HCT116 (cell line): ENCODE measurements at regions of chr1 and their contacts with region 1.

Region 1: DNA sequence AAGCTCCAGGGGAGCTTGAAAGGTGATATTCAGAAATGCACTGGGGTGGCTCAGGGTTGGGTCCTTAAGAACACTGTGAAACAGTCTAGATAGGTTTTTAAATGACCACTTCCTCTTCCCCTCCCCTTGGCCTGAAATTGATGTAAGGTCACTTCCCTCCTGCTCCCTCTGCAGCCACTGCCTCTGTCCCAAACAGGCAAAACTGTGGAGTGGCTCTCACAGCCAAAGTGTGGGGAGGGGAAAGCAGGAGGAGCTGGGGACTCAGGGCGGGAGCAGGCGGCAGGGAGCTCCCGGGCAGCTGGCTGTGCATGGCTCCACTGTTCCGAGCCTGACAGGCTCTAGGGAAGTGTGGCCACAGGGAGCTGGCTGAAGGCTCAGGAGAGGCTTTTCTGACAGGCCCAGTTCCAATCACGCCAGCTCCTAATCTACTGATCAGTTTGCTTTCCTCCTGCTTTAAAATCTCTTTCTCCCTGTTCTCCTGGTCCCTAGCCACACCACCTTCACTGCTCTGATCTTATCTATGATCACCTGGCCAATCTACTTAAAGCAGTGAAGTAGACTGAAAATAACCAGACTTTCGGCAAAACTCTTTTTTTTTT is 5.1 kb upstream of the CSRP1 start:
- DNase-seq: no peak
- ATAC-seq: no peak
- H3K4me3 ChIP-seq: no peak overlapping the region
- H3K27ac ChIP-seq: no peak overlapping the region
- H3K4me1 ChIP-seq: peaks cover 13 to 34% of the 10 kb centered on the region in 2 experiments
- H3K27me3 ChIP-seq: no peaks in the 10 kb centered on the region
- CTCF ChIP-seq: no peak
- POLR2A ChIP-seq: no peak
- RAD21 ChIP-seq: no peak

Region 2: GRCh38 chr1:201436393-201436792 is 75.6 kb before region 1 on chr1:
- CTCF ChIA-PET with region 1: interaction called, 41 read pairs
- POLR2A ChIA-PET with region 1: no interaction called
- RAD21 ChIA-PET with region 1: interaction called in 1 of 2 experiments, 5 read pairs
- intact Hi-C with region 1: loop called (anchors 1 kb)
- DNase-seq: peak; percentile 56
- ATAC-seq: peak; percentile 97
- H3K4me3 ChIP-seq: no peak overlapping the region
- H3K27ac ChIP-seq: no peak overlapping the region
- H3K4me1 ChIP-seq: peaks cover 13 to 19% of the 10 kb centered on the region in 2 experiments
- H3K27me3 ChIP-seq: no peaks in the 10 kb centered on the region
- CTCF ChIP-seq: peak; percentile 40 to 54 (median 48); a peak in 5 of 6 replicates
- POLR2A ChIP-seq: no peak
- RAD21 ChIP-seq: peak; percentile 54

Region 3: GRCh38 chr1:201447911-201448871 is 63.8 kb before region 1 on chr1:
- CTCF ChIA-PET with region 1: interaction called, 41 read pairs
- POLR2A ChIA-PET with region 1: interaction called, 3 read pairs
- RAD21 ChIA-PET with region 1: interaction called, 6 to 12 read pairs
- intact Hi-C with region 1: loop called (anchors 1 kb)
- DNase-seq: peak; percentile 57
- ATAC-seq: peak; percentile 100
- H3K4me3 ChIP-seq: no peak overlapping the region
- H3K27ac ChIP-seq: no peak overlapping the region
- H3K4me1 ChIP-seq: peaks cover 7 to 19% of the 10 kb centered on the region in 2 experiments; a peak in 3 of 4 replicates
- H3K27me3 ChIP-seq: no peaks in the 10 kb centered on the region
- CTCF ChIP-seq: peak; percentile 89 to 95 (median 94)
- POLR2A ChIP-seq: no peak
- RAD21 ChIP-seq: peak; percentile 91

Region 4: DNA sequence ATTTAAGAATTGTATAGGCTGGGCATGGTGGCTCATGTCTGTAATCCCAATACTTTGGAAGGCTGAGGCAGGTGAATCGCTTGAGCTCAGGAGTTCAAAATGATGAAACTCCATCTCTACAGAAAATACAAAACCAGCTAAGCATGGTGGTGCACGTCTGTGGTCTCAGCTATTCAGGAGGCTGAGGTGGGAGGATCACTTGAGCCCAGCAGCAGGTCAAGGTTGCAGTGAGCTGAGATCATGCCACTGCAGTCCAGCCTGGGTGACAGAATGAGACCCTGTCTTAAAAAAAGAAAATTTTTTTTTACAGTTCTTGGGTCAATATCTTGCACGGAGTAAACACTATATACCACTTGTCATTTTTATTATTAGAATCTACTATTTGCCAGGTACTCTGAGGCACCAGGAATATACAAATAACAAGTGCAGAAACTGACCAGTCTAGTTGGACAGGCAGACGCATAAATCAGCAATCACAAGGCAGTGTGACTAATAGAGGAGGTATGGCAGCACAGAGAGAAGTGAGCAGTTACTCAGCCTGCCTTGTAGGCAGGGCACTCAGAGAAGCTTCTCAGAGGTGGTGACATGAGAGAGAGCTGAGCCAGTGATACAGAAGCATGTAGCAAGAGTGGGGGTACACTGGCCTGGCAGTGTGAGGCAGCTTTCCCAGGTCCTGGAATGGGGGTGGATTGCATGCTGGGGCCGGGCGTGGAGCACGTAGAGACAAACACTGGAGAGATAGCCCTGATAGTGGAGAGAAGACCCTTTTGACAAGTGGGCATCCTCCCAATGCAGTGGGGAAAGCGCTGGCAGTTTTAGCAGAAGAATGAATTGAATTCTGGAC is 51.0 kb before region 1 on chr1:
- CTCF ChIA-PET with region 1: interaction called, 11 read pairs
- POLR2A ChIA-PET with region 1: interaction called, 3 read pairs
- RAD21 ChIA-PET with region 1: no interaction called
- intact Hi-C with region 1: no loop called
- DNase-seq: peak; percentile 86
- ATAC-seq: peak; percentile 85
- H3K4me3 ChIP-seq: peak overlapping the region; percentile 25 to 51
- H3K27ac ChIP-seq: peak overlapping the region; percentile 95
- H3K4me1 ChIP-seq: peaks cover 42 to 75% of the 10 kb centered on the region in 2 experiments
- H3K27me3 ChIP-seq: no peaks in the 10 kb centered on the region
- CTCF ChIP-seq: no peak
- POLR2A ChIP-seq: no peak
- RAD21 ChIP-seq: no peak

Region 5: DNA sequence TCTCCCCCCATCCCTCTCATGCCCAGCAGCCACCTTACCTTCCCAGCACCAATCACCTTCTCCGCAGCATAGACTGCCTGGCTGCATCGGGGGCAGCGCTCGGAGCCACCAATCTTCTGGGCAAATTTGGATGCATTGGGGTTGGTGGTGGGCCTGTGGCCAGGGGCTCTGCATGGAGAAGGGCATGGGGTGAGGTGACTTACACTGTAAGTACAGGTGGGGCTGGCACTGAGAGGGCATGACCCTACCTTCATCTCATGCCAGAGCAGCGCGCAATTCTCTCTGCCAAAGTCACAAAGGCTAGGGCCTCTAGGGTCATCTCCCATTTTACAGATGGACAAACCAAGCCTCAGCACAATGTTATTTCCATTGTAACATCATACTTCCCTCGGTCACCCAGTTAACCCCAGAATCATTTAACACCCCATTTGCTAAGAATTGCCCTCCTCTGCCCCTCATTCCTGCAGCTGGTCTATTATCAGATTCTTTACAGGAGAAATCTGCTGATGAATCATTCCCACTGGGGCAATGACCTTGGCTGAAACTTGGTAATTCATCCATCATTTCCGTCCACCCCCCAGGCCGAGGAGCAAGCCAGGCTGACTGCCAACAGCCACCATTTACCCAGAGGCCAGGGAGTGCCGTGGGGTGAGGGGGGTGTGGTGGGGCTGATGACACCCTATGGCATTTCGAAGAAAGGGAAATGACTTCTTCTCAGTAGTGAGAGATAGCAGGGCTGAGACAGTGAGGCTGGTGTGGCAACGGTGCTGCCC is 23.0 kb before region 1 on chr1:
- CTCF ChIA-PET with region 1: interaction called, 194 read pairs
- POLR2A ChIA-PET with region 1: no interaction called
- RAD21 ChIA-PET with region 1: interaction called in 1 of 2 experiments, 3 read pairs
- intact Hi-C with region 1: loop called (anchors 2 kb)
- DNase-seq: peak; percentile 68
- ATAC-seq: peak; percentile 87
- H3K4me3 ChIP-seq: 0 out of 4 replicates have a peak overlapping the region, but pooled peaks of 1 of the 2 experiments have one; percentile 7
- H3K27ac ChIP-seq: peak overlapping the region; percentile 25; the same call in 1 of the 2 replicates
- H3K4me1 ChIP-seq: peaks cover 13 to 20% of the 10 kb centered on the region in 2 experiments; a peak in 3 of 4 replicates
- H3K27me3 ChIP-seq: no peaks in the 10 kb centered on the region
- CTCF ChIP-seq: no peak
- POLR2A ChIP-seq: no peak
- RAD21 ChIP-seq: no peak

Region 6: GRCh38 chr1:201495471-201496295 is 16.4 kb before region 1 on chr1:
- CTCF ChIA-PET with region 1: interaction called, 23 read pairs
- POLR2A ChIA-PET with region 1: interaction called, 3 read pairs
- RAD21 ChIA-PET with region 1: interaction called in 1 of 2 experiments, 3 read pairs
- intact Hi-C with region 1: no loop called
- DNase-seq: no peak
- ATAC-seq: no peak
- H3K4me3 ChIP-seq: no peak overlapping the region
- H3K27ac ChIP-seq: no peak overlapping the region
- H3K4me1 ChIP-seq: no peaks in the 10 kb centered on the region; a peak in 1 of 4 replicates
- H3K27me3 ChIP-seq: no peaks in the 10 kb centered on the region
- CTCF ChIP-seq: no peak
- POLR2A ChIP-seq: no peak
- RAD21 ChIP-seq: no peak

Region 7: GRCh38 chr1:201500670-201501120 is 11.3 kb before region 1 on chr1:
- CTCF ChIA-PET with region 1: interaction called, 23 read pairs
- POLR2A ChIA-PET with region 1: interaction called, 3 read pairs
- RAD21 ChIA-PET with region 1: no interaction called
- intact Hi-C with region 1: no loop called
- DNase-seq: no peak
- ATAC-seq: no peak
- H3K4me3 ChIP-seq: no peak overlapping the region
- H3K27ac ChIP-seq: no peak overlapping the region
- H3K4me1 ChIP-seq: peaks cover 0 to 6% of the 10 kb centered on the region in 2 experiments; a peak in 1 of 4 replicates
- H3K27me3 ChIP-seq: no peaks in the 10 kb centered on the region
- CTCF ChIP-seq: no peak
- POLR2A ChIP-seq: no peak
- RAD21 ChIP-seq: no peak

Region 8: GRCh38 chr1:201686714-201687455 is 174.8 kb after region 1 on chr1:
- CTCF ChIA-PET with region 1: no interaction called
- POLR2A ChIA-PET with region 1: no interaction called
- RAD21 ChIA-PET with region 1: no interaction called
- intact Hi-C with region 1: no loop called
- DNase-seq: no peak
- ATAC-seq: no peak
- H3K4me3 ChIP-seq: no peak overlapping the region
- H3K27ac ChIP-seq: no peak overlapping the region
- H3K4me1 ChIP-seq: no peaks in the 10 kb centered on the region
- H3K27me3 ChIP-seq: no peaks in the 10 kb centered on the region
- CTCF ChIP-seq: no peak
- POLR2A ChIP-seq: no peak
- RAD21 ChIP-seq: no peak

Region 9: GRCh38 chr1:201807958-201808632 is 296.1 kb after region 1 on chr1:
- CTCF ChIA-PET with region 1: no interaction called
- POLR2A ChIA-PET with region 1: no interaction called
- RAD21 ChIA-PET with region 1: no interaction called
- intact Hi-C with region 1: no loop called
- DNase-seq: no peak
- ATAC-seq: no peak
- H3K4me3 ChIP-seq: no peak overlapping the region
- H3K27ac ChIP-seq: no peak overlapping the region
- H3K4me1 ChIP-seq: no peaks in the 10 kb centered on the region
- H3K27me3 ChIP-seq: no peaks in the 10 kb centered on the region
- CTCF ChIP-seq: no peak
- POLR2A ChIP-seq: no peak
- RAD21 ChIP-seq: no peak